ENCODE measurements at regions of chr21 and their contacts with region 1.

Region 1: GRCh38 chr21:33441489-33442477 is 38.0 kb downstream of the TMEM50B start:
- DNase-seq: peak; percentile 20 to 87
- ATAC-seq: peak; percentile 72 to 87
- H3K4me3 ChIP-seq: no peak overlapping the region
- H3K27ac ChIP-seq: peak overlapping the region; percentile 33 to 61; a peak in 2 of 6 replicates
- H3K4me1 ChIP-seq: peaks cover 14% of the 10 kb centered on the region
- CTCF ChIP-seq: no peak
- EP300 ChIP-seq: no peak
- POLR2A ChIP-seq: no peak
- RAD21 ChIP-seq: no peak

Region 2: DNA sequence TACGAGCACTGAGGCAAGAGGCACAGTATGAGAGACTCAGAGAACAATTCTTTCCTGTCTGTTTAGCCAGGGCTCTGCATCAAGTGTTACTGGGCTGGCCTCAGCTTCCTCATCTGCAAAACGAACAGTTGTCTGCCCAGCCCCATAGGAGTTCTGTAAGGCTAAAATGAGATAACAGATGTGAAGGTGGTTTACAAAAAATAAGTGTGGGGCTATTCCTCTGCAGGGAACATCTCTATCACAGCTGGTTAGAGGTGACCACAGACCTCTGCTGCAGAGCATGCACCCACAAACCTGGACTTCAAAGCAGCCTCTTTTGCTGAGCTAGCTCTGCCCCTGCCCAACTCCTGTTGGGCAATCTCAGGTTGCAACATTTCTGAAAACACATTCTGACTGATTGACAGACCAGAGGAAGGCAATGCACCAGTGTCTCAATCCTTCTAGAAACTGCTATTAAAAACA is 382.4 kb before region 1 on chr21:
- CTCF ChIA-PET with region 1: no interaction called
- POLR2A ChIA-PET with region 1: no interaction called
- DNase-seq: no peak
- ATAC-seq: no peak
- H3K4me3 ChIP-seq: no peak overlapping the region
- H3K27ac ChIP-seq: no peak overlapping the region
- H3K4me1 ChIP-seq: no peaks in the 10 kb centered on the region
- CTCF ChIP-seq: no peak
- EP300 ChIP-seq: no peak
- POLR2A ChIP-seq: no peak
- RAD21 ChIP-seq: no peak

Region 3: GRCh38 chr21:33199516-33200217 is 242.1 kb before region 1 on chr21:
- CTCF ChIA-PET with region 1: interaction called, 46 read pairs
- POLR2A ChIA-PET with region 1: interaction called, 3 read pairs
- DNase-seq: peak; percentile 69 to 86
- ATAC-seq: peak; percentile 43 to 65
- H3K4me3 ChIP-seq: no peak overlapping the region
- H3K27ac ChIP-seq: peak overlapping the region; percentile 25 to 62; a peak in 4 of 6 replicates
- H3K4me1 ChIP-seq: peaks cover 36% of the 10 kb centered on the region
- CTCF ChIP-seq: peak; percentile 78
- EP300 ChIP-seq: no peak
- POLR2A ChIP-seq: no peak
- RAD21 ChIP-seq: peak; percentile 92 to 95

Region 4: GRCh38 chr21:33296156-33296555 is 145.6 kb before region 1 on chr21:
- CTCF ChIA-PET with region 1: no interaction called
- POLR2A ChIA-PET with region 1: no interaction called
- DNase-seq: no peak
- ATAC-seq: no peak
- H3K4me3 ChIP-seq: no peak overlapping the region
- H3K27ac ChIP-seq: no peak overlapping the region
- H3K4me1 ChIP-seq: no peaks in the 10 kb centered on the region
- CTCF ChIP-seq: no peak
- EP300 ChIP-seq: no peak
- POLR2A ChIP-seq: no peak
- RAD21 ChIP-seq: no peak

Region 5: DNA sequence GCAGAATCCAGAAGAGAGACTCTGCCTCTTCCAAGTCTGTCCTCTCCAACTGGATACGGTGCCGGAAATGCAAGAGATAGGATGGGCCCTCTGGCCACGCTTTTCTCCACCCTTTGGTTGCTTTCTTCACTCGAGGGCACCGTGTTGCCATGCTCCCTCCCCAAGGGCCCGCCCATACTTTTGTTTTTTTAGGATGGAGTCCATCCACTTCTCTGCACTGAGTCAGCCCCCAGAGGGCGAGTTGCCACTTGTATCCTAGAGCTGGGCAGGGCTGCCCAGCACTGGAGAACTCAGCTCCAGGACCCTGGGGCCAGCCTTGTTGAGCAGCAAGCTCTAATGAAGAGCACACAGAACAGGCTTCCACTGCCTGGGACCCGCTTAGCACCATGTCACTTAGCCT is 13.1 kb before region 1 on chr21:
- CTCF ChIA-PET with region 1: interaction called, 14 read pairs
- POLR2A ChIA-PET with region 1: no interaction called
- DNase-seq: no peak
- ATAC-seq: peak in 1 of 2 experiments; percentile 70; a peak in 3 of 6 replicates
- H3K4me3 ChIP-seq: no peak overlapping the region
- H3K27ac ChIP-seq: no peak overlapping the region
- H3K4me1 ChIP-seq: peaks cover 13% of the 10 kb centered on the region; the same call in 2 of the 3 replicates
- CTCF ChIP-seq: no peak
- EP300 ChIP-seq: no peak
- POLR2A ChIP-seq: no peak
- RAD21 ChIP-seq: no peak

Region 6: DNA sequence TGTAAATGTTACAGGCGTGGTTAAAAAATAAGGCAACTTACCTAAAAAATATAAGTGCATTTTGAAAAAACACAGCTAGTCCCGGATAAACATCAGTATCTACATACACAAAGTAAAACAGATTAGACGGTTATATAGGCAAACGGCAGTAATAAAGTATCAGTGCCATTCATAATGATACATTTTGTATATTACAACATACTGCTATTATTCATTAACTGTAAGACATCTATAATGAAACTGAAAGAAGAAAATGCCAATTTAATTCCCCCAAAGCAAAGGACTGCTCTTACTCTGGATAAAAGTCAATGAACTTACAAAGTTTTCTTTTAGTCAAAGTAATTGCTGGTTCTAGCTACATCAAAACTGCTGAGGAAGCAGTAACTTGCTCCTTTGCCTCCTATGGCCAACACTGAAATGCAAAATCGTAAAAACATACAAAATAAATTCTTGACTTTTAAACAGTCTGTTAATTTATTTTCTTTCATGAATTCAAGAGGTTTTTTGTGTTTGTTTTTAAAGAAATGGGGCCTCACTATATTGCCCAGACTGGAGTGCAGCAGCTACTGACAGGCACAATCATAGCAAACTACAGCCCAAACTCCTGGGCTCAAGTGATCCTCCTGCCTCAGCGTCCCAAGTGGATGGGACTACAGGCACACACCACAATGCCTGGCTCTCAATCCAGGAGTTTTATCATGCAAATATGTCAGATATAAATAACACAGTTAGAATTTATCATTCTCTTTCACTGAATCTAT is 14.1 kb after region 1 on chr21:
- CTCF ChIA-PET with region 1: interaction called, 18 read pairs
- POLR2A ChIA-PET with region 1: interaction called, 5 read pairs
- DNase-seq: no peak
- ATAC-seq: no peak
- H3K4me3 ChIP-seq: no peak overlapping the region
- H3K27ac ChIP-seq: no peak overlapping the region
- H3K4me1 ChIP-seq: peaks cover 13% of the 10 kb centered on the region
- CTCF ChIP-seq: no peak
- EP300 ChIP-seq: no peak
- POLR2A ChIP-seq: no peak
- RAD21 ChIP-seq: no peak

Region 7: DNA sequence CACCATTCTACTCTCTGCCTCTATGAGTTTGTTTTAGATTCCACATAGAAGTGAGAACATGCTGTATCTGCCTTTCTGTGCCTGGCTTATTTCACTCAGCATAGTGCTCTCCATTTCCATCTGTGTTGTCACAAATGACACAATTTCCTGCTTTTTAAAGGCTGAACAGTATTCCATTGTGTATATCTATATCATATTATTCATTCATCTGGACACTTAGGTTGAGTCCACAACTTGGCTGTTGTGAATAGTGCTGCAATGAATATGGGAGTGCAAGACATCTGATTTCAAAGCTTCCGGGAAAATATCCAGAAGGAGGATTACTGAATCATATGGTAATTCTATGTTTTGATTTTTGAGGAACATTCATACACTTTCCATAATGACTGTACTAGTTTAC is 166.8 kb after region 1 on chr21:
- CTCF ChIA-PET with region 1: interaction called, 13 read pairs
- POLR2A ChIA-PET with region 1: no interaction called
- DNase-seq: no peak
- ATAC-seq: no peak
- H3K4me3 ChIP-seq: no peak overlapping the region
- H3K27ac ChIP-seq: no peak overlapping the region
- H3K4me1 ChIP-seq: no peaks in the 10 kb centered on the region
- CTCF ChIP-seq: no peak
- EP300 ChIP-seq: no peak
- POLR2A ChIP-seq: no peak
- RAD21 ChIP-seq: no peak